H1 (cell line): ENCODE measurements at regions of chr18 and their contacts with region 1.

Region 1: GRCh38 chr18:76875390-76876325 is 53.3 kb downstream of the ZNF236 start:
- DNase-seq: peak in 1 of 2 experiments; percentile 76
- H3K4me3 ChIP-seq: no peak overlapping the region
- H3K27ac ChIP-seq: no peak overlapping the region
- H3K4me1 ChIP-seq: no peaks in the 10 kb centered on the region
- H3K27me3 ChIP-seq: no peaks in the 10 kb centered on the region
- CTCF ChIP-seq: peak; percentile 42 to 79 (median 62)
- EP300 ChIP-seq: no peak
- POLR2A ChIP-seq: peak; percentile 48 to 85
- RAD21 ChIP-seq: peak; percentile 68 to 74

Region 2: DNA sequence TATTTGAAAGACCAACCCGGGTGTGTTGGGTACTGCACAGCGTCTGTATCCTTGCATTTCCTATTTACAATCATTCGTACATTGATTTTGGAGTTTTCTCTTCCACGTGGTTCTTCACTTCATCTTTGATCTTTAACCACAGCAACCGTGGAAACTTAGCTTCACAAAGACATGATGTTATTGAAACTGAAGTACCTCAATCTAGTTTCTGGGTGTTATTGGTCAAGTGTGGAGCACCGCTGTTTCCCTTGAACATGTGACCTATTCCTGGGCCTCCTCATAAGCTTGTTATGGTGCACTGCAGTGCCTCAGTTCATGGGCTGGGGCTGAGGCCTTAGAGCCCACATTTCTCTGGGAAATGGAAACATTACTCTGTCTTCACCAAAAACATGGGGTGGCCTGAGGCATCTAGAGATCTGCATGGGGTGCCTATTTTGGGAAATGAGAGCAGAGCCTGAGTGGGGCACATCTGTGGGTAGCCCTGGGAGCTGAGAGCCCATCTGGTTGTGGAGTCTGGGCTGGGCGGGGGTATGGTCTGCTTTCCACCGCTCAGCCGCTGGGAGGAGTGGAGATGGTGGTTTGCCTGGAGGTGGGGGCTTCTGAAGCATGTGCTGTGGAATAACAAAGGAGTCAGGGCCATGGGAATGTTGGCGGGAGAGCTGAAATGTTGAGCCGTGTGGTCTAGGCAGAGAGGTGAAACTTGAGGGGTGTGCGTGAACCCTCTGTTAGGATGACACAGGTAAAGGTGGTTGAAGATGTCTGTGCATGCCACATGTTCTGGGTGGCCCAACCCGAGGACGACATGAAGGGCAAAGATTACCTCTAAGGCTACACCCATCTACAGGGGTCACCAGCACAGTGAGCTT is 16.0 kb before region 1 on chr18:
- CTCF ChIA-PET with region 1: interaction called, 11 read pairs
- POLR2A ChIA-PET with region 1: no interaction called
- DNase-seq: no peak
- H3K4me3 ChIP-seq: no peak overlapping the region
- H3K27ac ChIP-seq: no peak overlapping the region
- H3K4me1 ChIP-seq: 0 out of 7 replicates have a peak, but pooled peaks cover 0 to 4% (median 2%) of the 10 kb centered on the region in 4 experiments
- H3K27me3 ChIP-seq: no peaks in the 10 kb centered on the region
- CTCF ChIP-seq: no peak
- EP300 ChIP-seq: no peak
- POLR2A ChIP-seq: no peak
- RAD21 ChIP-seq: no peak